WTC11 (cell line): ENCODE measurements at regions of chr2 and their contacts with region 1.

Region 1: DNA sequence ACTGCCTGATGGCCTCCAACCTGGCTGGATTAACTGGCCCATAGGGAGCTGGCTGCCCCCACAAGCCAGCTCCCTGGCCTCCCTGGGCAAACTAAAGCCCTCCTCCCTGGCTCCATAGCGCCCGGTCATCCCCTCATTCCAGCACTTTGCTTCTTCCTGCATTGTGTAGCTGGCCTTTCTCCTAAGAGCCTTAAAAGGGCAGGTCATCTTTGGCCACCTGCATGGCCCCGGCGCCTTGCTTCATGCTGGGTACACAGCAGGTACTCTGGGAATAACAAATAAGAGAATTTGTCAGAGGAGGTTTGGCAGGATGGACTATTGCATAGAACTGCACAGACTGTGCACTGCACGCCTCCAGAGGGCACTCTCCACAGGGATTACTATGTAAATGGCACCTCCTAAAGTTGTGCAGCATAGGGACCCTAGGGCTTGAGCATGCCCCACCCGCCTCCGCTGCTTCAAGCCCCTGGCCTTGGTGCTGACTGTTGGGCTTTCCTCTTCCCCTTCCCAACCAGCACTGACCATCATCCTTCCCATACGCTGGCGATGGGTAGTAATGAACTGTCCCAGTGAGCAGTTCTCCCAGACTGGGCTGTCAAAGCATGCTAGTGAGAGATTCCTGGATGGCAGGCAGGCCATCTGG is 10.9 kb downstream of the STEAP3 start:
- DNase-seq: peak; percentile 74
- ATAC-seq: peak; percentile 90
- H3K4me3 Mint-ChIP-seq: no peak overlapping the region
- H3K27ac Mint-ChIP-seq: no peak overlapping the region
- H3K4me1 Mint-ChIP-seq: peaks cover 65% of the 10 kb centered on the region
- H3K27me3 Mint-ChIP-seq: no peaks in the 10 kb centered on the region
- CTCF ChIP-seq: no peak

Region 2: GRCh38 chr2:119049968-119050704 is 184.4 kb before region 1 on chr2:
- CTCF ChIA-PET with region 1: no interaction called
- POLR2A ChIA-PET with region 1: no interaction called
- DNase-seq: peak; percentile 65
- ATAC-seq: peak; percentile 39
- H3K4me3 Mint-ChIP-seq: no peak overlapping the region
- H3K27ac Mint-ChIP-seq: no peak overlapping the region
- H3K4me1 Mint-ChIP-seq: peaks cover 27% of the 10 kb centered on the region
- H3K27me3 Mint-ChIP-seq: peaks cover 5% of the 10 kb centered on the region
- CTCF ChIP-seq: no peak

Region 3: GRCh38 chr2:119170504-119170903 is 64.0 kb before region 1 on chr2:
- CTCF ChIA-PET with region 1: no interaction called
- POLR2A ChIA-PET with region 1: no interaction called
- DNase-seq: no peak
- ATAC-seq: no peak
- H3K4me3 Mint-ChIP-seq: no peak overlapping the region
- H3K27ac Mint-ChIP-seq: no peak overlapping the region
- H3K4me1 Mint-ChIP-seq: peaks cover 11% of the 10 kb centered on the region
- H3K27me3 Mint-ChIP-seq: peaks cover 3% of the 10 kb centered on the region; the same call in 1 of the 2 replicates
- CTCF ChIP-seq: no peak

Region 4: GRCh38 chr2:119223521-119224390 is 10.7 kb before region 1 on chr2 and contains the start of gene STEAP3:
- CTCF ChIA-PET with region 1: interaction called, 11 read pairs
- POLR2A ChIA-PET with region 1: interaction called, 3 read pairs
- DNase-seq: peak; percentile 82
- ATAC-seq: peak; percentile 89
- H3K4me3 Mint-ChIP-seq: peak within 1 kb of the TSS; percentile 65
- H3K27ac Mint-ChIP-seq: no peak within 1 kb of the TSS
- H3K4me1 Mint-ChIP-seq: peaks cover 48% of the 10 kb centered on the region
- H3K27me3 Mint-ChIP-seq: peaks cover 20% of the 10 kb centered on the region
- CTCF ChIP-seq: no peak
- total RNA-seq, gene STEAP3: 20.5 to 24.0 TPM (median 21.4 TPM) in 3 replicates